ENCODE measurements at regions of chr3 and their contacts with region 1.

Region 1: DNA sequence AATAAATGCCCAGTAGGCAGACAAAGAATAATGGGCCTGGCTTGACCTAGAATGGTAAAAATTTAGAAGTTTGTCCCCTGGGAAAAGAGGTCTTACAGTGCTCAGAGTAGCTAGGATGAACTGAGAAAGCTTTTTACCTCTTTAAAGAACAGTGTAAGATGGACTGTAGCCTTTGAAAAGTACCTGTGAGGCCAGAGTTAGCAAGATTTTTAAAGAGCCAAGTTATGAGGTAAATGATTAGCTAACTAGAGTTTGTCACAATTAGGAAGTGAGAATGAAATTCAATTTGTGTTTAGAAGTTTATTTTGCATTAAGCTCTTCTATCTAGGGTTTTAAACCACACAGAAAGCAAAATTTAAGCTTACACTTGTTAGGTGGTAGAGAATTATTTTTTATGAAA is 480.9 kb downstream of the ZIC1 start:
- DNase-seq: peak; percentile 33
- ATAC-seq: peak; percentile 94
- H3K4me3 ChIP-seq: no peak overlapping the region
- H3K27ac ChIP-seq: no peak overlapping the region
- H3K4me1 ChIP-seq: no peaks in the 10 kb centered on the region
- H3K27me3 ChIP-seq: no peaks in the 10 kb centered on the region
- CTCF ChIP-seq: no peak
- EP300 ChIP-seq: peak; percentile 40 to 52; a peak in 2 of 4 replicates
- POLR2A ChIP-seq: no peak
- RAD21 ChIP-seq: no peak

Region 2: GRCh38 chr3:147529551-147529950 is 360.6 kb before region 1 on chr3:
- CTCF ChIA-PET with region 1: no interaction called
- POLR2A ChIA-PET with region 1: no interaction called
- RAD21 ChIA-PET with region 1: no interaction called
- SMC1A ChIA-PET with region 1: no interaction called
- in situ Hi-C with region 1: no loop called
- intact Hi-C with region 1: no loop called
- DNase-seq: no peak
- ATAC-seq: no peak
- H3K4me3 ChIP-seq: no peak overlapping the region
- H3K27ac ChIP-seq: no peak overlapping the region
- H3K4me1 ChIP-seq: no peaks in the 10 kb centered on the region
- H3K27me3 ChIP-seq: no peaks in the 10 kb centered on the region
- CTCF ChIP-seq: no peak
- EP300 ChIP-seq: no peak
- POLR2A ChIP-seq: no peak
- RAD21 ChIP-seq: no peak

Region 3: DNA sequence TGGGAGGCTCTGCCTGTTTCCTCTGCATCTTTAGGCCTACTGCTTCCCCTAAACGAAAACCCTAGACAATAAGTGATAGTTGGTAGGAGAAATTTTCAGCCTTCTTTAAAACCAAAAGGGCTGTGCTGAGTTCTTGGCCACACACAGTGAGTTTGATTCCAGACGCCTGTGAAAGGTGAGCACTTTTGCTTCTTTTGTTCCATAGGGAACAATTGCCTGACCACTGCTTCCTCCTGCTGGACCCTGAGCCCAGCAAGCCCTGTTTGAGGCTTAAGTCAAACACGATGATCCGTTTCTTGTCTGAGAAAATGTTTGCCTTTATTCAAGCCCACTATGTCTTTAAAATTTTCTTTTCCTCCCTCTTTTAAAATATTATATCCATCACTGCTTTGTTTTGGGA is 12.9 kb after region 1 on chr3:
- CTCF ChIA-PET with region 1: interaction called, 5 read pairs
- POLR2A ChIA-PET with region 1: interaction called, 3 read pairs
- RAD21 ChIA-PET with region 1: interaction called, 10 read pairs
- SMC1A ChIA-PET with region 1: interaction called, 12 read pairs
- in situ Hi-C with region 1: no loop called
- intact Hi-C with region 1: no loop called
- DNase-seq: no peak
- ATAC-seq: no peak
- H3K4me3 ChIP-seq: no peak overlapping the region
- H3K27ac ChIP-seq: no peak overlapping the region
- H3K4me1 ChIP-seq: no peaks in the 10 kb centered on the region
- H3K27me3 ChIP-seq: no peaks in the 10 kb centered on the region
- CTCF ChIP-seq: no peak
- EP300 ChIP-seq: no peak
- POLR2A ChIP-seq: no peak
- RAD21 ChIP-seq: no peak

Region 4: DNA sequence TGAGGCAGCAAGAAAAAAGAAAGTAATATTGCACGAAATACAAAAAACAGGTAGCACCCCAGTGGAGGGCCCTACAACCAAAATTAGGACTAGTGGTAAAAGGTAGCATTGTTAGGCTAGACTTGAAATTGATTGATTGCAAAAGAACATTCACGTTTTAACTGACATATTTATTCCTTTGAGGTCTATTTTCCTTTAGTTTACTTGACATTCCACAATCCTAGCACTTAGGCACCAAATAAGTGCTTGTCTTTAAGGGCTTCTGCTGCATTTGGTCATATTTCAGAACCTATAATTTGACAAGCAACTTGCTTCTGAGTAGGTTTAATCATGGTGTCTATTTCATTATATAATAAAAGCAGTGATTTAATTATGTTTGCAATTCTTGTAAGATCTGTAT is 164.9 kb after region 1 on chr3:
- CTCF ChIA-PET with region 1: no interaction called
- POLR2A ChIA-PET with region 1: no interaction called
- RAD21 ChIA-PET with region 1: no interaction called
- SMC1A ChIA-PET with region 1: no interaction called
- in situ Hi-C with region 1: no loop called
- intact Hi-C with region 1: no loop called
- DNase-seq: no peak
- ATAC-seq: no peak
- H3K4me3 ChIP-seq: no peak overlapping the region
- H3K27ac ChIP-seq: no peak overlapping the region
- H3K4me1 ChIP-seq: no peaks in the 10 kb centered on the region
- H3K27me3 ChIP-seq: no peaks in the 10 kb centered on the region
- CTCF ChIP-seq: no peak
- EP300 ChIP-seq: no peak
- POLR2A ChIP-seq: no peak
- RAD21 ChIP-seq: no peak

Region 5: GRCh38 chr3:148379763-148380382 is 489.8 kb after region 1 on chr3:
- CTCF ChIA-PET with region 1: no interaction called
- POLR2A ChIA-PET with region 1: no interaction called
- RAD21 ChIA-PET with region 1: no interaction called
- SMC1A ChIA-PET with region 1: no interaction called
- in situ Hi-C with region 1: no loop called
- intact Hi-C with region 1: no loop called
- DNase-seq: no peak
- ATAC-seq: peak; percentile 99
- H3K4me3 ChIP-seq: no peak overlapping the region
- H3K27ac ChIP-seq: no peak overlapping the region
- H3K4me1 ChIP-seq: no peaks in the 10 kb centered on the region
- H3K27me3 ChIP-seq: no peaks in the 10 kb centered on the region
- CTCF ChIP-seq: peak in 2 of 3 experiments; percentile 20 to 55; a peak in 3 of 6 replicates
- EP300 ChIP-seq: no peak
- POLR2A ChIP-seq: no peak
- RAD21 ChIP-seq: peak; percentile 57